HCT116 (cell line): ENCODE measurements at regions of chr5 and their contacts with region 1.

Region 1: GRCh38 chr5:131634996-131635754 is at the start of gene RAPGEF6:
- DNase-seq: peak; percentile 100
- ATAC-seq: peak; percentile 93
- H3K4me3 ChIP-seq: peak within 1 kb of the TSS; percentile 85 to 88
- H3K27ac ChIP-seq: peak within 1 kb of the TSS; percentile 88
- H3K4me1 ChIP-seq: peaks cover 5 to 29% of the 10 kb centered on the region in 2 experiments; a peak in 3 of 4 replicates
- H3K27me3 ChIP-seq: no peaks in the 10 kb centered on the region
- CTCF ChIP-seq: no peak
- POLR2A ChIP-seq: no peak
- RAD21 ChIP-seq: no peak
- total RNA-seq, gene RAPGEF6: 18.4 TPM

Region 2: GRCh38 chr5:131796793-131797693 is 161.9 kb after region 1 on chr5 and contains the start of gene FNIP1:
- CTCF ChIA-PET with region 1: no interaction called
- POLR2A ChIA-PET with region 1: no interaction called
- RAD21 ChIA-PET with region 1: no interaction called
- intact Hi-C with region 1: loop called (anchors 2 kb)
- DNase-seq: peak; percentile 85
- ATAC-seq: peak; percentile 95
- H3K4me3 ChIP-seq: peak within 1 kb of the TSS; percentile 90 to 95
- H3K27ac ChIP-seq: peak within 1 kb of the TSS; percentile 71
- H3K4me1 ChIP-seq: peaks cover 4 to 18% of the 10 kb centered on the region in 2 experiments; a peak in 3 of 4 replicates
- H3K27me3 ChIP-seq: no peaks in the 10 kb centered on the region
- CTCF ChIP-seq: no peak
- POLR2A ChIP-seq: peak; percentile 64
- RAD21 ChIP-seq: no peak
- total RNA-seq, gene FNIP1: 16.4 TPM